ENCODE measurements at regions of chr9 and their contacts with region 1.

Region 1: DNA sequence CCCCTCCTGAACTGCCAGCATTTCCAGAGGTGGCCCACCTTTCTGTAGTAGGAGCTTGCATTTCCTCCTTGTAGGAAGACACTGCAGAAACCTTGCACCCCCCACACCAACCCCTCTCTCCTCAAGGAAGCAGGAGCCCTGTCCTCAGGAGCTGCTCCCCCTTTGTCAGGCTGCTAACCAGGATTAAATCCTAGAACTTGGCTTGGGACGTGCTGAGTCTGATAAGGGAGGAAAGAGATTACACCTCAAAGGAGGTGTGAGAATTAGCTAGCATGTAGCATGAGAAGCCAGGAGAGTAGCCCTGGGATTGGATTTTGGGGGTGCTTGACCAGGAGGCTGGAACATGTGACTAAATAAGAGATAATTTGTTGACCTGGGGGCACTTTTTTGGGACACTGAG is 119.8 kb upstream of the ALDH1B1 start:
- DNase-seq: no peak
- H3K4me3 ChIP-seq: no peak overlapping the region
- H3K27ac ChIP-seq: no peak overlapping the region
- H3K4me1 ChIP-seq: no peaks in the 10 kb centered on the region
- H3K27me3 ChIP-seq: peaks cover 3% of the 10 kb centered on the region
- CTCF ChIP-seq: no peak

Region 2: GRCh38 chr9:38284588-38285051 is 11.9 kb after region 1 on chr9:
- CTCF ChIA-PET with region 1: no interaction called
- POLR2A ChIA-PET with region 1: no interaction called
- intact Hi-C with region 1: loop called (anchors 1 kb)
- DNase-seq: peak; percentile 14
- H3K4me3 ChIP-seq: no peak overlapping the region
- H3K27ac ChIP-seq: no peak overlapping the region
- H3K4me1 ChIP-seq: peaks cover 4% of the 10 kb centered on the region
- H3K27me3 ChIP-seq: no peaks in the 10 kb centered on the region
- CTCF ChIP-seq: no peak